AG04449 (cell line): ENCODE measurements at regions of chr6 and their contacts with region 1.

Region 1: DNA sequence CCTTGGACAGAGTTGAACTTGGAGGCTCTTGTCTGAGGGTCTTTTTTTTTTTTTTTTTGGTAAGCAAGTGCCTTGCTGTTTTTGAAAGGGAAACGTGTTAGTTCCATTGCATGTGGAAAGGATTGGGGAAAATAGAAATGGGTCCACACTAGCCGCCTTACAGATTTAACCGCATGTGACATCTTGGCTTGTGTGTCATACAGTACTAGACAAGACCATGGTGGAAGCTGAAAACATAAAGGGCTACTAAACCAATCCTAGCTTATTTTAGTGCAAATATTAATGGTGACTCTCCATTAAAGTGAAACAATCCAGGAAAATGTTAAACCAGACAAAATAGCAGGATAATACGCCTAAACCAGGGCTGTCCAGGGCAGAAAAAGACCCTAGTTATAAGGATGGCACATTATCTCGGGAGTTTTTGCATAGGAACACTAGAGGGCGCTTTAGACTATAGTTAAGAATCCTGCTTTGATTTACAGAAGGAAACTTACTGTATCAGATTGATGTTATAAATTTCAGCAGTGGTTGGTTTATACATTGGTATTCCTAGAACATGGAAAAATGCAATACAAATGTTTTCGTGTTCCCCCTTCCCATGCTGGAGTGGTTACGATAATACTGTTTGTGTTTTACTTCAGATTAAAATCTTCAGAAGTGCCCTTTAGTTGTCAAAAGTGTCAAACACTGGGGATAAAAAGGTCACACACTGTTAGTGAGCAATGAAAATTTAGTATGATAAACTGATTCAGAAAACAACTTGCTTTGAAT is 59.8 kb upstream of the DEK start:
- DNase-seq: no peak
- H3K4me3 ChIP-seq: no peak overlapping the region
- CTCF ChIP-seq: peak; percentile 52

Region 2: DNA sequence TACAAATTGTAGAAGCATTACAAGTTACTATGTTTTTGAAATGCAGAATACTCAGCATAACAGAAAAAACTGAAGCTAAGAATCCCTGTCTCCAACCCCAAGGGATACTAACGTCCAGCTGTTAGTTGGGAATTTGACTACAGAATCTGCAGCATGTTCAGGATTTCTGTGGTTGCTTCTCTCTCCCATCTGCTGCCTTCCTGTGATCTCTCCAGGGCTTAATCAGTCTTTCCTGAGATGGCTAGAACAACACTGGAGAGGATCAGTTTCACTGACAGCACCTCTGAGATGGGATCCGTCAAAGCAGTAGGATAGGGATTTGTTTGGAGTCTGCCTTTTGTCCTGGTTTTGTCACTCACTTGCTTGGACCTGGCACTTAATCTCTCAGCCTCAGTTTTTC is 544.1 kb before region 1 on chr6:
- CTCF ChIA-PET with region 1: no interaction called
- POLR2A ChIA-PET with region 1: no interaction called
- DNase-seq: no peak
- H3K4me3 ChIP-seq: no peak overlapping the region
- CTCF ChIP-seq: no peak

Region 3: DNA sequence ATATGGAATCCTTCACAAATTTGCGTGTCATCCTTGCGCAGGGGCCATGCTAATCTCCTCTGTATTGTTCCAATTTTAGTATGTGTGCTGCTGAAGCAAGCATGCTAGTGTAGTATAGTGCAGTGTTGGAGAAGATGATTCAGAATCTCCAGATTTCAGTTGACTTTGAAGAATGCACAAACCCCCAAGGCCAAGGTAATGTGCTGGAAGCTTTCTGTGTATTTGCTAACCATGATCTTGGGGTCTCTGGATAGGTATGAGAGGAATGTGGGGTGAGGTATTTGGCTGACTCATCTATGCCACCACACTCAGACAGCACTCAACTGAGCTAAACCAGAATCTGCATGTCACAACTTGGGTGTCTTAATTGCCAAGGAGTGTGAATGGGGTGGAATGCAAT is 17.1 kb before region 1 on chr6:
- CTCF ChIA-PET with region 1: interaction called, 11 read pairs
- POLR2A ChIA-PET with region 1: no interaction called
- DNase-seq: peak; percentile 91
- H3K4me3 ChIP-seq: no peak overlapping the region
- CTCF ChIP-seq: no peak

Region 4: GRCh38 chr6:18334251-18334650 is 10.1 kb after region 1 on chr6:
- CTCF ChIA-PET with region 1: interaction called, 30 read pairs
- POLR2A ChIA-PET with region 1: no interaction called
- DNase-seq: no peak
- H3K4me3 ChIP-seq: no peak overlapping the region
- CTCF ChIP-seq: no peak

Region 5: DNA sequence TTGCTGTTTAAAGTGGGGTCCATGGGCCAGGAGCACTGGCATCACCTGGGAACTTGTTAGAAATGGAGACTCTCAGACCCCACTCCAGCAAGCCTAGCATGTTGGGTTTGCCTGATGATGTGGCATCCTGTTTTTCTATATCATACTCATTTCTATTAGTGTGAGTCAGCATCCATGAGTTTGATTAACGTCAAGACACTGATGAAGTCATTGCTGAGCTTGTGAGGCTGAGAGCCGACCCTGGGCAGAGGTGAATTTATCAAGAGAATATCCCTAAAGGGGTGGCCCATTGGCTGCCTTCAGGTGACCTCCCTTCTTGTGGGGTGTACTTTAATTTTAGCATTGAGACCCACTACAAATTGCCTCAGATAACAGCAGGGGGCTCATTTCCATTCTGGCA is 19.6 kb after region 1 on chr6:
- CTCF ChIA-PET with region 1: interaction called, 13 read pairs
- POLR2A ChIA-PET with region 1: no interaction called
- DNase-seq: peak; percentile 44
- H3K4me3 ChIP-seq: no peak overlapping the region
- CTCF ChIP-seq: no peak

Region 6: DNA sequence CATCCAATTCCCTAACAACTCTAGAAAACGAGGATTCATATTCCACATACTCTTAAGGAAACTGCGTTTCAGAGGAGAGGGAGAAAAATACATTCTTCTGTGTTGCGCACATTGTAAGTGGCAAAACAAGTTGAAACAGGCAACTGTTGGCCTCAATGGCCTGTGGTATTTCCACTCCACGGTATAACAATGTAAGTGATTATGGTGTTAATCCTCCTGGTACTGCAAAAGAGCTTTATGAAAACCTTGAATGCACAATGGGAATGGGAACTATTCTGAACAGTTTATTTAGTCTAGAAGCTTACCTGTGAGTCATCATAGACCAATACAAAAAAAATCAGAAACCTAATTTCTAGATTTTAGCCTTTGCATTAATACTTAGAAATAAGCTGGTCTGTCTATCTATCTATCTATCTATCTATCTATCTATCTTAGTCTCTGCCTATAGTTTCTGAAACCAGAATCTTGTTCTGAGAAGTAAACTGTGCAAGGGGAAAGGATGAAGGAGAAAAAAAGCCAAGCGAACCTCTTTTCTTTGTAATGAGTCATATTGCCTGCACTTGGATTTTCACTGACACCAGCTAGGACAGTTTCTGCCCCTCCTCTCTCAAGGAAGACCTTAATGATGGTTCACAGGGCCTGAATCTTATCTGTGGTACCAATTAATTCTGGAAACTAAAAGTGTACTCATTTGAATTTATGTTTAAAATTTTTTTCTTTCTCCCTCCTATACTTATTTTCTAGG is 164.6 kb after region 1 on chr6:
- CTCF ChIA-PET with region 1: interaction called, 11 read pairs
- POLR2A ChIA-PET with region 1: no interaction called
- DNase-seq: no peak
- H3K4me3 ChIP-seq: no peak overlapping the region
- CTCF ChIP-seq: no peak